ENCODE measurements at regions of chr20 and their contacts with region 1.

Region 1: GRCh38 chr20:44601801-44602204 is 19.4 kb downstream of the PKIG start:
- DNase-seq: no peak
- H3K4me3 Mint-ChIP-seq: no peak overlapping the region
- H3K27ac Mint-ChIP-seq: no peak overlapping the region
- H3K4me1 Mint-ChIP-seq: peaks cover 10% of the 10 kb centered on the region
- H3K27me3 Mint-ChIP-seq: no peaks in the 10 kb centered on the region

Region 2: GRCh38 chr20:43670405-43670804 is 931.4 kb before region 1 on chr20:
- intact Hi-C with region 1: loop called (anchors 5 kb)
- DNase-seq: no peak
- H3K4me3 Mint-ChIP-seq: no peak overlapping the region
- H3K27ac Mint-ChIP-seq: no peak overlapping the region
- H3K4me1 Mint-ChIP-seq: peaks cover 6% of the 10 kb centered on the region
- H3K27me3 Mint-ChIP-seq: peaks cover 3% of the 10 kb centered on the region